ENCODE measurements at regions of chr2 and their contacts with region 1.

Region 1: DNA sequence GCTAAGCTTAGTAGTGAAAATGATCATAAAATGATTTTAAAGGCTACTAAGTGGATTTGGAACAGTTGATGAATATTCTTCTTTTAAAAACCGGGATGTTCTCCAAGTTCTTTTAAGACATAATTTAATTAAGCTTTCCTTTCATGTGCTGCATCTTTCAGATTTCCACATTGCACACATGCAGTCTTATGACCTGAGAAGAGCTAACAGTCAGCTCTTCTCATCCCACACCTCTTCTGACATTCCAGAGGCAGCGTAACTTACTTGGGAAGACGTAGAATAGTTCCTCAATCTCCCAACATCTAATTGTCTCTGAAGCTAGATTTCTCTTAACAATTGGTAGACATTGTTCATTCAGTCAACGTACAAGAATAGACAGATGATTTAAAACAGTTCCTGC is 181.8 kb downstream of the SP3 start:
- DNase-seq: no peak
- H3K4me3 ChIP-seq: no peak overlapping the region
- H3K27ac ChIP-seq: no peak overlapping the region
- H3K4me1 ChIP-seq: no peaks in the 10 kb centered on the region
- H3K27me3 ChIP-seq: peaks cover 2% of the 10 kb centered on the region
- CTCF ChIP-seq: no peak

Region 2: GRCh38 chr2:173680580-173680979 is 102.8 kb before region 1 on chr2:
- CTCF ChIA-PET with region 1: no interaction called
- dilution Hi-C with region 1: no loop called
- in situ Hi-C with region 1: no loop called
- intact Hi-C with region 1: no loop called
- DNase-seq: no peak
- H3K4me3 ChIP-seq: no peak overlapping the region
- H3K27ac ChIP-seq: no peak overlapping the region
- H3K4me1 ChIP-seq: peaks cover 10% of the 10 kb centered on the region
- H3K27me3 ChIP-seq: no peaks in the 10 kb centered on the region
- CTCF ChIP-seq: no peak

Region 3: DNA sequence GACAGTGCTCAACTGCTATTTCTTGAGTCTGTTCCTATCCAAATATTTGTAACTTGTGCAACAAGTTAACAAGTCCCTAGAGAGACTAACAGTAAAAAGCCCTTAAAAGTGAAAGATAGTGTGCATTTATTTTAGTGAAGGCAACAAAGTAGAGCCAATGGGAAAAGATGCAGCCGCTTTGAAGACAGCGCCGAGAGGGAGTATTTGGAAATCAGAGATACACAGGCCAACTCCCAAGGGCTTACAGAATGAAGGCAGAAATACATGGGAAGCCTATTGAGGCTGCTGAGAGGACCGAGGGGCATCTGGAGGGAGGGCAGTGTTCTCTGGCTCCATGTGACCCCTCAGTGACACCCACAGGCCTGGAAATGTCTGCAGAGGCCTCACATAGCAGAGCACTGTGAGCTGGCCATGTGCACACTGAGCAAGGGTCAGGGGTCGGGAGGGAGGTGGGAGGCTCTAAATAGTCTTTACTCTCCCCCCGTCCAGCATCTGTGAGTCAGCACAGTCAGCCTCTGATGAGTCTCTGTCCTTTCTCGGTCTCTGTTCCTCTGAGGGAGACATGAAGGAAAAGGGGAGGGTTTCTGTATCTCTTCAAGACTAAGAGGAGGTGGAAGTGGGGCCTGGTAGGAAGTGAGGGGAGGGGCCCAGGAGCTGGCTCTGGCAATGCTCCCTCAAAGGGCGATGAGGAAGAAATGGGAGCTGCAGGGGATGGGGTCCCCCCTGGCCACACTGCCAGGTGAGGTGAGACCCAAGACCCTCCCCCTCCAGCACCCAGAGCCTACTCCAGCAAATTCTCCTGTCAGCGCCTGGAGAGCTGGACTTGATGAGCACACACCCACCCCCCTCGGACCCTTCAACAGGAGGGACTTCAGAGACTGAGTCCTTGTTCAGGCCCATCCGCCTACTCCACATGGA is 48.2 kb after region 1 on chr2:
- CTCF ChIA-PET with region 1: no interaction called
- dilution Hi-C with region 1: loop called (anchors 5 kb)
- in situ Hi-C with region 1: no loop called
- intact Hi-C with region 1: no loop called
- DNase-seq: no peak
- H3K4me3 ChIP-seq: no peak overlapping the region
- H3K27ac ChIP-seq: no peak overlapping the region
- H3K4me1 ChIP-seq: peaks cover 3% of the 10 kb centered on the region
- H3K27me3 ChIP-seq: peaks cover 6% of the 10 kb centered on the region
- CTCF ChIP-seq: no peak

Measured in mammary epithelial cell (primary cell).